ENCODE measurements at regions of chr16 and their contacts with region 1.

Region 1: DNA sequence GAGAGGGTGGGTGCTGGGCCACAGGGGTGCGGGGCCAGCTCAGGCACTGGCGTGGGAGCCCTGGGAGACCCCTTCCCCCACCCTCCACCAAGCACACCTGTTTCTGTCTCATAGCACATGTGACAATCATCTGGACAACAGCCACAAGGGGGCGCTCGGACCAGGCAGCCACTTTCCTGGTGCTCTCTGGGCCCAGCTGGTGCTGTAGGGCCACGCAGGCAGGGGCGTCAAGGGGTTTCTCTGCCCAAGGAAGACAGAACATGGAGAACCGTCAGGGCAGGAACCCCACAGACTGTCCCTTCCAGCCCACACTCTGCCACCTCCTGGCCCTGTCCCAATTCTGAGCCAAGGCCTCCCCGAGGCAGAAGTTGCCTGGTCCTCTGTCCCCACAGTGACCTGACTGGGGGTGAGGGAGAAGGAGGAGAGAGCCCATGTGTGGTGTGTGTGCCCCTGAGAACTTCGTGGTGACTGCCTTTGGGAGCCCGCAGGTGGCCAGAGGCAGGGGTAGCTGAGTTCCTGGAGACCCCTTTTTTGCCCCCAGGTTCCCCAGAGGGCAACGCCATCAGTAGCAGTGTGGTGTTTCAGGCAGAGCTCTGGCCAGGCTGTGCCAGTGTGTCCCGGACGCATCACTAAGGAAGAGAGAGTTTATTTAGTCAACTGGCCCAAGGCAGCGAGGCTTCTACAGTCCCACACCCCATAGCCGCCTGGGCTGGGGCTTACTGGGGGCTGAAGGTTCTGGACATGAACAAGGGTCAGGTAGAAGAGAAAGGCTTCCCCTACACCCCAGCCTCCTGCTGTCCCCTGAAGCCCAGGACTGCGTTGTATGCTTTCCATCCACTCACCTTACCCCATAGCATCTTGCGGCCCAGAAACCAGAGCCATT is 3.1 kb upstream of the SETD6 start:
- DNase-seq: peak; percentile 55
- ATAC-seq: 0 out of 2 replicates have a peak, but pooled peaks have one; percentile 21
- H3K4me3 ChIP-seq: no peak overlapping the region
- H3K27ac ChIP-seq: no peak overlapping the region
- H3K4me1 ChIP-seq: 0 out of 2 replicates have a peak, but pooled peaks cover 2% of the 10 kb centered on the region
- H3K27me3 ChIP-seq: no peaks in the 10 kb centered on the region
- CTCF ChIP-seq: peak; percentile 70
- POLR2A ChIP-seq: no peak
- RAD21 ChIP-seq: peak; percentile 42; the same call in 1 of the 2 replicates

Region 2: DNA sequence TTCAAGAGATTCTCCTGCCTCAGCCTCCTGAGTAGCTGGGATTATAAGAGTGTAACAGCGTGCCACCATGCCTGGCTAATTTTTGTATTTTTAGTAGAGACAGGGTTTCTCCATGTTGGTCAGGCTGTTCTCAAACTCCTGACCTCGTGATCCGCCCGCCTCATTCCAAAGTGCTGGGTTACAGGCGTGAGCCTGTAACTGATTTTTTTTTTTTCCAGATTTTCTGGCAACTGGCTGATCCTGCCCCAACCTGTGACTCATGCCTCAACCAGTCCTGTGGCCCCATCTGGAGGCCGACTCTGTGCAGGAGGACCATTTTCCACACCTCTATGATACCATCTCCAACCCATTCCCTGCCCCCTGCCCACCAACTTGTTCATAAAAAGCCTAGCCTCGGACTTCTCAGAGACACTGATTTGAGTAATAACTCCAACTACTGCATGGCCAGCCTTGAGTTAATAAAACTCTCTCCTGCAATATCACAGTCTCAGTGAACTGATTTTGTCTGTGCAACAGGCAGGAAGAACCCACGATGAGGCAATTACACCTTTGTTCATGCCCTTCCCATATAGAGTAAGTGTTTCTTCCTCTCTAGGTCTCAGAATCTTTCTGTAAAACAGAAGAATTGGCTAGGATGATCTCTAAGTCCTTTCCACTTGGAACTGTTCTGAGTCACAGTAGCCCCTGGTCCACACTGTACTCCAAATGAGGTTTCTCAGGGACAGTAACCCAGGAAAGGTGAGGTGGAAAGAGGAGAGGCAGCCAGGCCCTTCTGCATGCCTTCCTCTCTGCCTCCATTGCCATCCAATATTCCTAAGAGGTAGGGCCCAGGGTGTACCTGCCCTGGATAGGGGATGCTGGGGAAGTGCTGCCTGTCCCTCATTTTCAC is 126.2 kb after region 1 on chr16:
- CTCF ChIA-PET with region 1: no interaction called
- POLR2A ChIA-PET with region 1: no interaction called
- dilution Hi-C with region 1: no loop called
- in situ Hi-C with region 1: no loop called
- intact Hi-C with region 1: loop called (anchors 2 kb)
- DNase-seq: peak; percentile 91
- ATAC-seq: peak; percentile 99
- H3K4me3 ChIP-seq: no peak overlapping the region
- H3K27ac ChIP-seq: no peak overlapping the region
- H3K4me1 ChIP-seq: peaks cover 1% of the 10 kb centered on the region; the same call in 1 of the 2 replicates
- H3K27me3 ChIP-seq: no peaks in the 10 kb centered on the region
- CTCF ChIP-seq: peak; percentile 62
- POLR2A ChIP-seq: no peak
- RAD21 ChIP-seq: peak; percentile 66

Region 3: DNA sequence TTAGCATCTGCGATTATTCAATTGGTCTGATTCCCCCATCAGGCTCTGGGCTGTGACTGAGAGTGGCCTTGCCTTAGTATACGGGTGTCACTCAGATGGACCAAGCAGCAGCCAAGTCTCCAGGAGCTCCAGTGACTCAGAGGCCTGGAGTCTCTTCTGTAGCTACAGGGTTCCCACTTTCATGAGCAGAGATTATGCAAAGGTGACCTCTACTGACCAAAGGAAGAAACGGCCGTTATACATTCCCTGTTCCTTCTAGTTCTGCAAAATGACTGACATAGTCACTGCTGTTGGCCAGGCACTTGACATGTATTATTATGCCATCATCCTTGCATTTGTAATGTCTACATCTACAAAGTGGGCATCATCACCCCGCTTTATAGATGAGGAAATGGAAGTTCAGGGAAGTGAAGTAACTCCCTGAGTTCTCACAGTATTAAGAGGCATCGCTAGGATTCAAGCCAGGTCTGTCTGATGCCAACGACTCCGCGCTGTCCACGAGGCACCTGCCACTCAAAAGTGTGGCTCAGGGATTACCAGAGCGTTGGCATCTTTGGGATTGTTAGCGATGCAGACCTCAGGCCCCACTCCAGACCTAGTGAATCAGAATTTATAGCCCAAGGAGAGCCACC is 149.1 kb after region 1 on chr16:
- CTCF ChIA-PET with region 1: interaction called, 3 read pairs
- POLR2A ChIA-PET with region 1: no interaction called
- dilution Hi-C with region 1: no loop called
- in situ Hi-C with region 1: no loop called
- intact Hi-C with region 1: loop called (anchors 1 kb)
- DNase-seq: peak; percentile 91
- ATAC-seq: peak; percentile 97
- H3K4me3 ChIP-seq: no peak overlapping the region
- H3K27ac ChIP-seq: no peak overlapping the region
- H3K4me1 ChIP-seq: no peaks in the 10 kb centered on the region
- H3K27me3 ChIP-seq: no peaks in the 10 kb centered on the region
- CTCF ChIP-seq: peak; percentile 87
- POLR2A ChIP-seq: no peak
- RAD21 ChIP-seq: peak; percentile 91

Region 4: GRCh38 chr16:58755989-58756649 is 243.9 kb after region 1 on chr16:
- CTCF ChIA-PET with region 1: no interaction called
- POLR2A ChIA-PET with region 1: no interaction called
- dilution Hi-C with region 1: no loop called
- in situ Hi-C with region 1: no loop called
- intact Hi-C with region 1: loop called (anchors 1 kb)
- DNase-seq: peak; percentile 67
- ATAC-seq: peak; percentile 99
- H3K4me3 ChIP-seq: no peak overlapping the region
- H3K27ac ChIP-seq: no peak overlapping the region
- H3K4me1 ChIP-seq: no peaks in the 10 kb centered on the region
- H3K27me3 ChIP-seq: peaks cover 8% of the 10 kb centered on the region
- CTCF ChIP-seq: peak; percentile 64
- POLR2A ChIP-seq: no peak
- RAD21 ChIP-seq: peak; percentile 83